CD4-positive, alpha-beta T cell (primary cell): ENCODE measurements at regions of chr5 and their contacts with region 1.

Region 1: GRCh38 chr5:40688127-40688761 is 8.5 kb downstream of the PTGER4 start:
- DNase-seq: peak; percentile 75 to 94 (median 84)
- ATAC-seq: peak; percentile 75
- H3K4me3 ChIP-seq: peak overlapping the region; percentile 91
- H3K4me3 Mint-ChIP-seq: peak overlapping the region; percentile 99
- H3K27ac ChIP-seq: peak overlapping the region in 1 of 2 donors; percentile 38
- H3K27ac Mint-ChIP-seq: peak overlapping the region; percentile 84
- H3K4me1 ChIP-seq: peaks cover 32% of the 10 kb centered on the region
- H3K4me1 Mint-ChIP-seq: peaks cover 84% of the 10 kb centered on the region
- H3K27me3 ChIP-seq: no peaks in the 10 kb centered on the region
- H3K27me3 Mint-ChIP-seq: no peaks in the 10 kb centered on the region
- CTCF ChIP-seq: peak; percentile 87

Region 2: DNA sequence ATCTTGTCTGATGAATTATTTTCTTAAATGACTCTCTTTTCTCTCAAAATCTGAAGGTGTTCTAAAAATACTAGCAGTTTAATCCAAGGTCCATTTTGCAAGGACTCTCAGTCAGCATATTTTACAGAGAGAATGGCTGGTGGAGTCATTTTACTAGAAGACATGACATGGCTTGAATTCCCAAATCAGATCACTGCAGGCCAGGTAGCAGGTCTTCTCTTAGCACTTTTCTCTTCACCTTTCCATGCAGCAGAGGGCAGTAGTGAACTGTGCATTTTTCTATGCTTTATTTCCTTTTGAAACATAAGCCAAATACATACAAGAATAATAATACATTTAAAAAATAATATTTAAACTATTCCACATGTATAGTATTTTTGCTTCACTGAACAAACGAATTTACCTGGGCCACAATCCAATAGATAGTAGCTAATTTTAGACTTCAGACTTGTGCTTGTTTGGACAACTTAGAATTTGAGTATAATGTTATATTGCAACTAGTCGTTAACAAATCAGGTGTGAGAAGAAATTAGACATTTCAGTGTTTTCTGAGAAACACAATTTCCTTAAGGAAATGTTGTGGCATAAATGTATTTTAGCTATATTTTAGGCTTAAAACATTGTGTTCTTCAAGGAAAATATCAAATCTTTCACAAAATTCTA is 974.1 kb before region 1 on chr5:
- CTCF ChIA-PET with region 1: no interaction called
- POLR2A ChIA-PET with region 1: interaction called, 3 read pairs
- intact Hi-C with region 1: loop called in 1 of 2 experiments (anchors 2 kb)
- DNase-seq: peak in 11 of 14 experiments; percentile 6 to 71 (median 18)
- ATAC-seq: peak; percentile 34
- H3K4me3 ChIP-seq: no peak overlapping the region
- H3K4me3 Mint-ChIP-seq: no peak overlapping the region
- H3K27ac ChIP-seq: no peak overlapping the region
- H3K27ac Mint-ChIP-seq: no peak overlapping the region
- H3K4me1 ChIP-seq: no peaks in the 10 kb centered on the region
- H3K4me1 Mint-ChIP-seq: no peaks in the 10 kb centered on the region
- H3K27me3 ChIP-seq: peaks cover under 1 to 2% of the 10 kb centered on the region in 2 experiments
- H3K27me3 Mint-ChIP-seq: peaks cover 11% of the 10 kb centered on the region
- CTCF ChIP-seq: peak; percentile 61

Region 3: DNA sequence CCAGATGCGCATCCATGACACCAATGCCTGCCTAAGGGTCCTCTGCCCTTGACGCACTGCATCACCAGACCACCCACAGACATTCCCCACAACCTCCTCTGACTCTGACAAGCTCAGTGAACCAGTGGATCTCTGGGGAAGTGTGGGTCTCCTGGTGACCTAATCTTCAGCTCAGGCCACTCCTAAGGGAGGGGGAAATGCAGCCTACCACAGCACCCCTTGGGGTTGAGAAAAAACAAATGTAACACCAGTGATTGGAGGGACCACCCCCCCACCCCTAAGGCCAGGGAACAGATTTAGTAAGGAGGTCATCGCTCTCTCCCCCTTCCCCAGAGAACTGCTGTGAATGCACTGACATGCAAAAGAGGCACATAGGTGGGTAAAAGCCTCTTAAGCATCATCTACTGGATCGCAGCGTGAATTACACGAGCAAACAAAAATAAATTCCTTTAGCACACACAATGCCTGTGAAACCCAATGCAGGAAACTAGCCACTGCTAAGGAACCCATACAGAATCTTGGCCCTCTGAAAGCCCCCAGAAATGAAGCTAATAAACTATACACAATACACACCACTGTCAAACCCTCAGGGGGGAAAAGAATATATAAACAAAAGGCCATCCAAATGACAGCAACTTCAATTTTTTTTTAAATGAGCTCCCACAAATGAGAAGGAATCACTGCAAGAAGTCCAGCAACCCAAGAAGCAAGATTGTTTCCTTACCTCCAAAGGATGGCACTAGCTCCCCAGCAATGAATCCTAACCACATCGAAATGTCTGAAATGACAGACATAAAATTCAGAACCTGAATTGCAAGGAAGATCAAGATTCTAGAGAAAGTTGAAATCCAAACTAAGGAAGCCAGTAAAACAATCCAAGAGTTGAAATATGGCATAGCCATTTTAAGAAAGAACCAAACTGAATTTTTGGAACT is 522.2 kb before region 1 on chr5:
- CTCF ChIA-PET with region 1: interaction called, 3 read pairs
- POLR2A ChIA-PET with region 1: no interaction called
- intact Hi-C with region 1: loop called (anchors 2 to 5 kb)
- DNase-seq: peak in 4 of 14 experiments; percentile 21 to 47 (median 41)
- ATAC-seq: no peak
- H3K4me3 ChIP-seq: no peak overlapping the region
- H3K4me3 Mint-ChIP-seq: no peak overlapping the region
- H3K27ac ChIP-seq: no peak overlapping the region
- H3K27ac Mint-ChIP-seq: no peak overlapping the region
- H3K4me1 ChIP-seq: no peaks in the 10 kb centered on the region
- H3K4me1 Mint-ChIP-seq: no peaks in the 10 kb centered on the region
- H3K27me3 ChIP-seq: no peaks in the 10 kb centered on the region
- H3K27me3 Mint-ChIP-seq: no peaks in the 10 kb centered on the region
- CTCF ChIP-seq: no peak

Region 4: GRCh38 chr5:40346901-40347300 is 341.3 kb before region 1 on chr5:
- CTCF ChIA-PET with region 1: no interaction called
- POLR2A ChIA-PET with region 1: no interaction called
- intact Hi-C with region 1: no loop called
- DNase-seq: no peak
- ATAC-seq: no peak
- H3K4me3 ChIP-seq: no peak overlapping the region
- H3K4me3 Mint-ChIP-seq: no peak overlapping the region
- H3K27ac ChIP-seq: no peak overlapping the region
- H3K27ac Mint-ChIP-seq: no peak overlapping the region
- H3K4me1 ChIP-seq: no peaks in the 10 kb centered on the region
- H3K4me1 Mint-ChIP-seq: no peaks in the 10 kb centered on the region
- H3K27me3 ChIP-seq: no peaks in the 10 kb centered on the region
- H3K27me3 Mint-ChIP-seq: no peaks in the 10 kb centered on the region
- CTCF ChIP-seq: no peak

Region 5: DNA sequence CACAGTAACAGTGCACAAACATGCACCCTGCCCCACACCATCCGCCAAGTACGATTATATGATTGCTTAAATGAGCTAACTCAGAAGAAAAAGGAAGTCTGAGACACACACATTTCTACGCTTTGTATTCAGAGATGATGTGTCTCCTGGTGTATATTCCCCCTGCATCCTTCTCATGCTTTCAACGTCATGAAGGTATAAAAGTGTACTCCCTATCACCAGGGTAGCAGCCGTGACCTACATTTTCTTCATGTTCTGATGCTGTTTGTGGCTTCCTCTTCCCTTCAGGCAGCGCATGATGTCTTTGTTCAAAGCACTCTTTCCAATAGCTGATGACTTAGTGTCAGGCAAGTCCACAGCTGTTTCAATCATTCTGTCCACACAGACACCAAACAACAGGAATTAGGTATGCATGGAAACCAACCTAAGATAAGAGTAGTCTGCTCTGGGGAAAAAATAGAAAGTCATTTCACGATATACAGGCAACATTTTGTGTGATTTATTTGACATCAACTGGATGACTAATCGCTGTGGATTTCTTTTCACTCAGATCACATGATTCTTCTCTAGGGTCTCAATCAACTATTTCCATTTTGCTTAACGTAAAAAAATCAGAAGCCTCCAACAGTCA is 277.9 kb before region 1 on chr5:
- CTCF ChIA-PET with region 1: interaction called, 3 read pairs
- POLR2A ChIA-PET with region 1: interaction called, 9 read pairs
- intact Hi-C with region 1: loop called in 1 of 2 experiments (anchors 2 kb)
- DNase-seq: peak in 13 of 14 experiments; percentile 44 to 97 (median 66)
- ATAC-seq: peak; percentile 79
- H3K4me3 ChIP-seq: peak overlapping the region; percentile 33
- H3K4me3 Mint-ChIP-seq: peak overlapping the region; percentile 65
- H3K27ac ChIP-seq: peak overlapping the region; percentile 94 to 96
- H3K27ac Mint-ChIP-seq: peak overlapping the region; percentile 87
- H3K4me1 ChIP-seq: peaks cover 53% of the 10 kb centered on the region
- H3K4me1 Mint-ChIP-seq: peaks cover 53% of the 10 kb centered on the region
- H3K27me3 ChIP-seq: no peaks in the 10 kb centered on the region
- H3K27me3 Mint-ChIP-seq: no peaks in the 10 kb centered on the region
- CTCF ChIP-seq: no peak

Region 6: DNA sequence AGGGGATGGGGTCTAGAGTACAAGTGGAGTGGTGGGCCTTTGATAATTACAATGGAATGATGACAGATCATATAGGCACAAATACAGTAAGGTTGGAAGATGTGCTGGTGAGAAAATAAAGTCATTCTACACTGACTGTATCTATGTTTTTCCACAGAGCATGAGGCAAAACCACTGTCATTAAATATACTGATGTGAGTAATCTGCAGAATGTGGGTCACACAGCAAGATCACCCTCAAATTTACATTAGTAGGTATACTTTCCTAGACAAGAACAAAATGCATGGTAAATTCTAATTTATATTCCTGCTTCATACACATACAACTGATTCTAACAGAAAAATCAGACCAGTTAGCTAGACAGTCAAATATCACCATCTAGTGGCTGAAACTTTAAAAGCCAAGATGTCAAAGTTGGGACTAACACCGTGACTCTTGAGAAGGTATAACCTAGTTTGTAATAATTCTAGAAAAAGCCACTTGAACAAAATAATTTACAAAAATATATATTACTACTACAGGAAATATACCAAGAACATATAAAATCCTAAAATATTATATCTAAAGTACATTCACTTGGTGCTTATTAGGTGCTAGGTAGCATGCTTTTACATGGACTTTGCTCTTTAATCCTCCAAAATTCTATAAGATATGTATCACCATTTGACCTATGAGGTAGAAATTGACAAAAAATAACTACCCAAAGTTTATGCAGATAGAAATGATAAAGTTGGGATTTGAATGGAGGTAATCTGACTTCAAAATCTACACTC is 48.0 kb after region 1 on chr5:
- CTCF ChIA-PET with region 1: no interaction called
- POLR2A ChIA-PET with region 1: no interaction called
- intact Hi-C with region 1: loop called (anchors 2 kb)
- DNase-seq: peak in 3 of 14 experiments; percentile 70 to 78 (median 77)
- ATAC-seq: peak; percentile 72
- H3K4me3 ChIP-seq: no peak overlapping the region
- H3K4me3 Mint-ChIP-seq: no peak overlapping the region
- H3K27ac ChIP-seq: no peak overlapping the region
- H3K27ac Mint-ChIP-seq: no peak overlapping the region
- H3K4me1 ChIP-seq: no peaks in the 10 kb centered on the region
- H3K4me1 Mint-ChIP-seq: peaks cover 38% of the 10 kb centered on the region
- H3K27me3 ChIP-seq: no peaks in the 10 kb centered on the region
- H3K27me3 Mint-ChIP-seq: no peaks in the 10 kb centered on the region
- CTCF ChIP-seq: peak; percentile 80